Motor neuron (in vitro differentiated cells): ENCODE measurements at regions of chr9 and their contacts with region 1.

Region 1: GRCh38 chr9:137240861-137241489 is at the start of gene TUBB4B:
- ATAC-seq: peak; percentile 54 to 83 (median 75)
- H3K4me3 ChIP-seq: peak within 1 kb of the TSS; percentile 66 to 92 (median 78)
- H3K27ac ChIP-seq: peak within 1 kb of the TSS; percentile 83 to 92
- H3K4me1 ChIP-seq: peaks cover 13 to 25% of the 10 kb centered on the region in 2 donors
- total RNA-seq, gene TUBB4B: 57.6 to 372 (median 151) TPM

Region 2: DNA sequence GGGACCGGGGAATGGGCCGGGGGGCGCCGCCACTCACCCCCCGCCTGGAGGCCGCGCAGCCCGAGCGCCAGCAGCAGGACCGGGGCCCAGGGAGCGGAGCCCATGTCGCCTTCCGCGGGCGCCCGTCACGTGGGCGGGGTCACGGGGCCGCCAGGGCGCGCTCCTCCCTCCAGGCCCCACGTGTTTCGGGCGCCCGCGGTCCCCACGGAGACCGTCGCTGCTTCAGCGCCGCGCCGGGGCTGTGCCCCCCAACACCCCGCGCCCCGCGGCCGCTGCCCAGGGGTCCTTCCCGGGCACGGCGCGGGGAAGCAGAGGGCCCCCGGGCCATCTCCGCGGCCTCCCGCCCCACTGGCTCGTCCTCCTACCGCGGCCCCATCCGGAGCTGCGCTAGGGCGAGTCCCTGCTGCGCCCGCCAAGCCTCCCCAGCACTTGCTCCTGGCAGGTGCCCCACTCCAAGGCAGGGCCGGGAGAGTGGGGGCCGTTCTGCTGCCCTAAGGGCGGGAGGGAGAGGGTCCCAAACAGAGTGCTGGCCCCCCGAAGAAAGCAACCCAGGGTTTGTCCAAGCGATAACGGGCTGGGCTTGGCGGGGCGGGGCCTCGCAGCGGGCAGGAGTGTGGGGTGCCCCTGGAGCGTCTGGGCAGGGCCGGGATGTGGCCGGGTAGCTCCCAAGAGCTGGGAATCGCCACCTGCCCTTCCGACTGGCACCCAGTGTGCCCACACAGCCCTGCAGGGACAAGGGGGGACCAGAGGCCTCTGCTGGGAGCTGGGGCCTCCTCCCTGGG is 126.2 kb before region 1 on chr9 and contains the start of gene DPP7:
- in situ Hi-C with region 1: loop called in 1 of 9 experiments (anchors 25 kb)
- ATAC-seq: peak; percentile 79 to 92 (median 82)
- H3K4me3 ChIP-seq: peak within 1 kb of the TSS; percentile 37 to 60 (median 42)
- H3K27ac ChIP-seq: no peak within 1 kb of the TSS
- H3K4me1 ChIP-seq: no peaks in the 10 kb centered on the region
- total RNA-seq, gene DPP7: 14.2 to 233 (median 56.1) TPM

Region 3: GRCh38 chr9:137851516-137852249 is 610.7 kb after region 1 on chr9:
- in situ Hi-C with region 1: no loop called
- ATAC-seq: peak in 2 of 8 experiments; percentile 25 to 36
- H3K4me3 ChIP-seq: no peak overlapping the region
- H3K27ac ChIP-seq: no peak overlapping the region
- H3K4me1 ChIP-seq: no peaks in the 10 kb centered on the region